ENCODE measurements at regions of chr5 and their contacts with region 1.

Region 1: DNA sequence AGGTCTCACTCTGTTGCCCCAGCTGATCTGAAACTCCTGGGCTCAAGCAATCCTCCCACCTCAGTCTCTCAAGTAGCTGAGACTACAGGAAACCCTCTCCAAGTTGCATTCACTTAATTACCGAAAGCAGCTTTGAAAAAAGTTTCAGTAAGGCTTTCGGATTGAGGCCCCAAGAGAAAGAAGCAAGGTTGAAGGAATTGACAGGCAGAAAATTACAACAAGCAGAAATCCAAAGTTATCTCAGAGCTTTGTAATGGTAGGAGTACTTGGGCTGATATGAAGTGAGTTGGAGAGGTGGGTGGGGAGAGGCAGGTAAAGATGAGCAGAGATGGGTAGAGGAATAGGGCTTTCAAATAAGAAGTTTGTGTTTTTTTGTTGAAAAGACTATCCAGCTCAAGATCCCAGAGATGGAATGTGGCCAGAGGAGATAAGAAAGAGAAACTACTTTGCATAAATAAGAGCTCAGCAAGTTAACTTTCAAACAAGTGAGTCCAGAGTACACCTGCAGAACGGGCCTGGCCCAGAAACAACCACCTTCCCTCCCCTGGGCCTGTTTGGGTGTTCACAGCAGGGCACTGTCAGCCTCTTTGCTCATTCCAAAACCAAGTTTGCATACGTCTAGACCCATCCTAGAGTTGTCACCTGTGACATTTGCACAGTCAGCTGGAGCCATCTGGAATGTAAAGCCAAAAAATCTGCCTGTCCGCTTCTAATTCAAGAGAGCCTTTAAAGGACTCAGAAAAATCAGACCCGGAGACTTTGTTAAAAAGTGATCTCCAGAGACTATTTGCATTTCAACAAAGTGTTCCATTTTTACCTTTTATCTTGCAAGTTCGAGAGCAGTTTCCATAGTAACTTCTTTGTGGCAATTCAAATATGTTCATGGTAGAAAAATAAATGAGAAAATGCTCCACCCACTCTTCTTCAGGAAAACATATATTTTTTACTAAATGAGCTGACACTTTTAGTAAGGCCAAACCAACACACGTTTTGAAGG is 2.3 kb upstream of the CLINT1 start:
- DNase-seq: peak; percentile 47 to 53
- H3K4me3 ChIP-seq: no peak overlapping the region
- H3K4me3 Mint-ChIP-seq: peak overlapping the region; percentile 45
- H3K27ac Mint-ChIP-seq: peak overlapping the region; percentile 37
- H3K4me1 ChIP-seq: peaks cover 33% of the 10 kb centered on the region
- H3K4me1 Mint-ChIP-seq: peaks cover 31% of the 10 kb centered on the region
- H3K27me3 ChIP-seq: no peaks in the 10 kb centered on the region
- H3K27me3 Mint-ChIP-seq: no peaks in the 10 kb centered on the region
- CTCF ChIP-seq: no peak

Region 2: DNA sequence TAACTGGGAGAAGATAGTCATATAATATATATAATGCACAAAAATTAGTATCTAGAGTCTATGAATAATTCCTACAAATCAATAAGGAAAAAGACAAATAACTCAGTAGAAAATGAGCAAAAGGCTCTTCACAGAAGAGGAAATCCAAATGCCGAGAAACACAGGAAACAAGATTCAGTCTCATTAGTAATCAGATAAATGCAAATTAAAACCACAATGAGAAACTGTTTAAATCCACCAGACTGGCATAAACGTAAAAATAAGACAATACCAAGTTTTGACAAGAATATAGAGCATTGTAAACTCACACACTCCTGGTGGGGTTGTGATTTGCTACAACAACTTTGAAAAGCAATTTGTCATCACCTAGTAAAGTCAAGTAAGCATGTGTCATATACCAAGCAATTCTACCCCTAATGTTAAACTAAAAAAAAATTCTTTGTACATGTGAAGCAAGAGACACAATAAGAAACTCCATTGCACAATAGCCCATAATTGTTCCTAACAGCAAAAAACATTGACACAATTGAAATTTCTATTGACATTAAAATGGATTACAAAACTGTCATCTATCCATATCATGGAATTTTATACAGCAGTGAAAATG is 1380.9 kb after region 1 on chr5:
- CTCF ChIA-PET with region 1: no interaction called
- POLR2A ChIA-PET with region 1: interaction called, 11 read pairs
- intact Hi-C with region 1: no loop called
- DNase-seq: no peak
- H3K4me3 ChIP-seq: no peak overlapping the region
- H3K4me3 Mint-ChIP-seq: no peak overlapping the region
- H3K27ac Mint-ChIP-seq: no peak overlapping the region
- H3K4me1 ChIP-seq: no peaks in the 10 kb centered on the region
- H3K4me1 Mint-ChIP-seq: no peaks in the 10 kb centered on the region
- H3K27me3 ChIP-seq: no peaks in the 10 kb centered on the region
- H3K27me3 Mint-ChIP-seq: peaks cover 8% of the 10 kb centered on the region
- CTCF ChIP-seq: no peak

Measured in Caco-2 (cell line).